ENCODE measurements at regions of chr17 and their contacts with region 1.

Region 1: DNA sequence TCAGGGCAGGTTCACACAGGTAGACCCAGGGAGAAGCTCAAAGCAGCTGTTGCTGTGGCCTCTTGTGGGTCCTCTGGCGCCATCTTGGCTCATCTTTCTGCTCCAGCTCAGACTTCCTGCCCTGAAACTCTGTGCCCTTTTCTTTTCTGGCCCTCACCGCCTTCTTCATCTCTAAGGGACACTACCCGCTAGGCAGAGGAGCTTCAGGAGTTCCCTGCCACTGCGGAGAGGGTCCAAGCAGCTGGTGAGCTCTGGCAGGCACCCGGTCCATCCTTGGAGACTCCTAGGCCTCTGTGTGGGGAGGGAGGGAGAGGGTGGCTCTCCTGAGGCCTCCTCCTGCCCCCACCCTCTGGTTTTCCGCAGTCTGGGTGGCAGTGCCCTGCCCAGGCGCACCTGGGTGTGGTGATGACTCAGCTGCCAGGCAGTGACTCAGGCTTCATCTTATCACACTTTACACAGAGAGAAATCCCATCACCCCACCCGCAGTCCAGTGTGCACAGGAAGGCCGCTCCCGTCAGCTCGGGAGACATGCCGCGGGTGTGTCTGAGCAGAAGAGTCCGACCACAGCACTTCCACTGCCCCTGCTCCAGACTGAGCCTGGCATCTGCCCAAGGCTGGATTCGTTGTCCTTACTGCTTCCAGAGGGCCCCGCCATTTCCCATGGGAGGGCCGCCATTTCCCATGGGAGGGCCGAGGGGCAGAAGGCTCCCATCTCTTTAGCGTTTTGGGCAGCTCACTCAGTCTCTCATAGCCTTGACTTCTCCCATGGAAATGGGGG is 7.3 kb downstream of the NT5C start:
- DNase-seq: peak; percentile 98
- H3K4me3 Mint-ChIP-seq: peak overlapping the region; percentile 66
- H3K27ac Mint-ChIP-seq: peak overlapping the region; percentile 95
- H3K4me1 Mint-ChIP-seq: peaks cover 18% of the 10 kb centered on the region
- H3K27me3 Mint-ChIP-seq: no peaks in the 10 kb centered on the region
- CTCF ChIP-seq: no peak

Region 2: DNA sequence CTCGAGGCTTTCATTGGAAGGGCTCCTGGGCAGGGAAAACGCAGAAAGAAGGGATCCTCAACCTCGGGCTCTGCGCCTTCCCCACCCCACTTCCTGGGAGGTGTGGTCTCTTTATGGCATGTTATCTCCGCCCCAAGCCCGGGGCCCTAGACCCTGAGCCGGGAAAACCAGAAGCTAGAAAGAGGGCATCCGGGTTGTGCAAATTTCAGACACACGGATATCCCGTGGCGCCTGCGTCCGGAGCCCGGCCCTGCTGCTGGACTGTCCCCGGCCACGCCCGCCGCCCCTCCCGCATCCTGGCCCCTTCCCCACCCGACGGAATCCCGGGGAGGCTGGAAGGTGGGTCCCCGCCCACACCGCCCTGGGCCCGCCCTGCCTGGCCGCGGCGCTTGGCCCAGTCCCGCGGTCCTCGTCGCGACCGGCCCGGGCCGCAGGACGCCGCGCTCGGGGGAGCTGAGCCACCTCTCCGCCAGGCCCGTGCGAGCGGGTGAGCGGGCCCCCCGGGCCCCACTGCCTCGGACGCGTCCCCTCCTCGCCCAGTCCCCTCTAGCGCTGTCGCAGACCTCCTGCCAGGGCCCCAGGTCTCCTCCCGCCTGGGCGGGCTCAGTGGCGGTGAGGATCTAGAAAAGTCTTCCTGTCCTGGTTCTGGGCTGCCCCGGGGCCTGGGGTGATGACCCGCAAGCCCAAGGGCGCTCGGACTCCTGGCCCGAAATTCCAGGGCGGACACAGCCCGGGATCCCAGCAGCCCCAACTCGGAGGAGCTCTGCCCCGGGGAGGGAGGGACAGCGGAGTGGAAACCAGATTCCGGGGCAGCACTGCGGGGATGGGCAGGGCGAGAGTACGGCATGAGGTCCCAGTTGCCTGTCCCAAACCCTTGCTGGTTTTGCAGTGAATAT is 36.4 kb before region 1 on chr17 and contains the start of gene SLC16A5:
- CTCF ChIA-PET with region 1: interaction called, 3 read pairs
- POLR2A ChIA-PET with region 1: interaction called, 12 read pairs
- intact Hi-C with region 1: no loop called
- DNase-seq: peak; percentile 95
- H3K4me3 Mint-ChIP-seq: peak within 1 kb of the TSS; percentile 87
- H3K27ac Mint-ChIP-seq: peak within 1 kb of the TSS; percentile 93
- H3K4me1 Mint-ChIP-seq: peaks cover 48% of the 10 kb centered on the region
- H3K27me3 Mint-ChIP-seq: no peaks in the 10 kb centered on the region
- CTCF ChIP-seq: no peak
- total RNA-seq, gene SLC16A5: 26.0 and 33.1 TPM in 2 replicates

Region 3: GRCh38 chr17:75096082-75096625 is 28.1 kb before region 1 on chr17:
- CTCF ChIA-PET with region 1: no interaction called
- POLR2A ChIA-PET with region 1: interaction called, 11 read pairs
- intact Hi-C with region 1: no loop called
- DNase-seq: peak; percentile 97
- H3K4me3 Mint-ChIP-seq: peak overlapping the region; percentile 62
- H3K27ac Mint-ChIP-seq: peak overlapping the region; percentile 98
- H3K4me1 Mint-ChIP-seq: peaks cover 35% of the 10 kb centered on the region
- H3K27me3 Mint-ChIP-seq: no peaks in the 10 kb centered on the region
- CTCF ChIP-seq: no peak

Region 4: DNA sequence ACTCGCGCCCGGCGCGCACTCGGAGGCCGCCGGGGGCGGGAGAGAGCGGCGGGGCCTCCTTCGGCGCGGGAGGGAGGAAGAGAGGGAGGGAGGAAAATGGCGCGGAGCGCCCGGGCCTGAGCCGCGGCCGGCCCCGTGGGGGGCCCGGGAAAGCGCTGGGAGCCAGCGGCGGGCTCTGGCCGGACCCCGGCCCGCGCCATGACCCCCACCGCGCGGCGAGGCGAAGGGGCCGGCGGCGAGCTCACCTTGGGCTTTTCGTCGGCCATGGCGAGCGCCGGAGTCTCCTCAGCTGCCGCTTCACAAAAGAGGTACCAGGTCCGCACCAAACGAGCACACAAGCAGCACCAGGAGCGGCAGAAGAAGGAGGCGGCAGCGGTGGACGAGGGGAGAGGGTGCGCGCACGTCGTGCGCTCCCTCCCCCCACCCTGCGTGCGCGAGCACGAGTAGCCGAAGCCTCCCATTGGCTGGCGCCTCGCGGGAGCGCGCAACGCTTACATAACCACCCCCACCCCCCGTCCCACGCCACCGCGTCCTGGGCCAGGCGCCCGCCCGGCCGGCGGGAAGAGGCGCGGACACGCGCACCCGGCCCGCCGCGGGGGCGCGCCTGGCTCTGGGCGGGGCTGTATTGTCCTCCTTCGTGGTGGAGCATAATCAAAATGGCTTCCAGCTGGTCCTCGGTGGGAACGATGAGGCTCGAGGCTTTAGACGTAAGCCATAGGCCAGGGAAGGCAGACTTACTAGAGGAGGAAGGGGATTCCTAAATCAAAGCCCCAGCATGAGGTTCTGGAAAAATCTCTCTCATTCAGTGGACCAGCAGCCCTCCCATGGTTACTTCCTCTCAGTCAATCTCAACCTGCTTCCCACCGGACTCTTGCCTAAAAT is 58.6 kb after region 1 on chr17 and contains the start of gene SUMO2:
- CTCF ChIA-PET with region 1: no interaction called
- POLR2A ChIA-PET with region 1: interaction called, 19 read pairs
- intact Hi-C with region 1: no loop called
- DNase-seq: peak; percentile 92
- H3K4me3 Mint-ChIP-seq: peak within 1 kb of the TSS; percentile 80
- H3K27ac Mint-ChIP-seq: peak within 1 kb of the TSS; percentile 77
- H3K4me1 Mint-ChIP-seq: peaks cover 20% of the 10 kb centered on the region
- H3K27me3 Mint-ChIP-seq: no peaks in the 10 kb centered on the region
- CTCF ChIP-seq: peak; percentile 20
- total RNA-seq, gene SUMO2: 186 and 194 TPM in 2 replicates

Region 5: GRCh38 chr17:75539967-75540711 is 415.9 kb after region 1 on chr17:
- CTCF ChIA-PET with region 1: no interaction called
- POLR2A ChIA-PET with region 1: no interaction called
- intact Hi-C with region 1: no loop called
- DNase-seq: no peak
- H3K4me3 Mint-ChIP-seq: no peak overlapping the region
- H3K27ac Mint-ChIP-seq: no peak overlapping the region
- H3K4me1 Mint-ChIP-seq: no peaks in the 10 kb centered on the region
- H3K27me3 Mint-ChIP-seq: no peaks in the 10 kb centered on the region
- CTCF ChIP-seq: no peak

Measured in MCF 10A (cell line).